ENCODE measurements at regions of chr4 and their contacts with region 1.

Region 1: DNA sequence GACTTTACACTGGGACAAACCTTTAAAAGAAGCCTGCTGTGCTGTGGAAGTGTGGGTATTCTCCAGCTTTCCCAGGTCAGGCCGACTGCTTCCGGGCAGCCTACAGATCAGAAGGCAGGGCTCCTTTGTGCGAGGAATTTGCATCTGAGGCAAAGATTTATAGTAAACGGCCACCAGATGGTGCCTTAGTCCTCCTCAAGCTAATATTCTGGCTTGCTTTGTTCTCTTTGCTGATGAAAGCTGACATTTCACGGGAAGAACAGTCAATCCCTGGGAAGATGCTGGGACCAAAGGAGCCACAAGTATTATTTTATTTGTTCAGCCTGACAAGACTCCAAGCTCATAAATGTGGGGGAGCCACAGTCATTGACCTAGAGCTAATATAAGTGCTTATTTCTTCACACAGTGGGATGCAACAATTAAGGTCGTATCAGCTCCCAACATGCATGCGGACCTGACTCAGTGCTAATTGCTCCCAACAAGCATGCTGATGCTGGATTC is 120.7 kb upstream of the TRIM2 start:
- DNase-seq: peak; percentile 36 to 92 (median 76)

Region 2: GRCh38 chr4:152849350-152849749 is 234.1 kb before region 1 on chr4:
- intact Hi-C with region 1: loop called (anchors 2 kb)
- DNase-seq: no peak

Region 3: GRCh38 chr4:153038623-153039311 is 44.7 kb before region 1 on chr4:
- intact Hi-C with region 1: no loop called
- DNase-seq: peak in 1 of 42 donors; percentile 15

Region 4: DNA sequence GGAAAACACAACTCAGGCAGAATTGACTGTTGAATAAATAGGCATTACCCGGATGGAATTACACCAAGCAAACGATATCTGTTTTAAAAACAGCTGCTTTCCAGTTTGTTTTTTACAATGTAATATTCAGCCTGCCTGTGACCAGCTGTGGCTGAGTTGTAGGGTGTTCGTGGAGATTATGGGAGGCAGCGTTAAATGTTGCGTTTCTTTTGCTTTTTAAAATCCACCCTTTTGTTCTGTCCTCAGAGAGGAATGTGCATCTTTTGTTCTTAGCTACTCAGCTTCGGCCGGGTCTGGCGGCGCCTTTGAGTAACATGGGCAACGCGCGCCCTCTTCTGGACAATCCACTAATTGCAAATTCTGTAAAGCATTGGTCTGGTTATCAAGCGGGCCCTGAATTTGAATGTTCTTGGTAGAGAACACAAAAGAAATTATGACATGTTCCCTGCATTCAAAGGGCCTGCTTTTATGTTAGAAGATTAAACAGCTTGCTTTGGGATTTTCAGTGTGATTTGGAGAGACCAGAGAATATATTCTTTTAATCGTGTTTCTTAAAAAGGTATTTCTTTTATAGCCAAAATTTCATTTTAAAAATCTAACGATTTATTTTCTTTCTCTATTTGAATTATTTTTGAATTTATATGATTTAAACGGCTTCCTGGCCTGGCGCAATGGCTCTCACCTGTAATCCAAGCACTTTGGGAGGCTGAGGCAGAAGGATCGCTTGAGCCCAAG is 44.4 kb after region 1 on chr4:
- intact Hi-C with region 1: loop called (anchors 1 kb)
- DNase-seq: peak; percentile 81 to 99 (median 94)

Region 5: GRCh38 chr4:153432968-153433753 is 349.7 kb after region 1 on chr4:
- intact Hi-C with region 1: no loop called
- DNase-seq: peak in 32 of 42 donors; percentile 14 to 64 (median 34)

Region 6: DNA sequence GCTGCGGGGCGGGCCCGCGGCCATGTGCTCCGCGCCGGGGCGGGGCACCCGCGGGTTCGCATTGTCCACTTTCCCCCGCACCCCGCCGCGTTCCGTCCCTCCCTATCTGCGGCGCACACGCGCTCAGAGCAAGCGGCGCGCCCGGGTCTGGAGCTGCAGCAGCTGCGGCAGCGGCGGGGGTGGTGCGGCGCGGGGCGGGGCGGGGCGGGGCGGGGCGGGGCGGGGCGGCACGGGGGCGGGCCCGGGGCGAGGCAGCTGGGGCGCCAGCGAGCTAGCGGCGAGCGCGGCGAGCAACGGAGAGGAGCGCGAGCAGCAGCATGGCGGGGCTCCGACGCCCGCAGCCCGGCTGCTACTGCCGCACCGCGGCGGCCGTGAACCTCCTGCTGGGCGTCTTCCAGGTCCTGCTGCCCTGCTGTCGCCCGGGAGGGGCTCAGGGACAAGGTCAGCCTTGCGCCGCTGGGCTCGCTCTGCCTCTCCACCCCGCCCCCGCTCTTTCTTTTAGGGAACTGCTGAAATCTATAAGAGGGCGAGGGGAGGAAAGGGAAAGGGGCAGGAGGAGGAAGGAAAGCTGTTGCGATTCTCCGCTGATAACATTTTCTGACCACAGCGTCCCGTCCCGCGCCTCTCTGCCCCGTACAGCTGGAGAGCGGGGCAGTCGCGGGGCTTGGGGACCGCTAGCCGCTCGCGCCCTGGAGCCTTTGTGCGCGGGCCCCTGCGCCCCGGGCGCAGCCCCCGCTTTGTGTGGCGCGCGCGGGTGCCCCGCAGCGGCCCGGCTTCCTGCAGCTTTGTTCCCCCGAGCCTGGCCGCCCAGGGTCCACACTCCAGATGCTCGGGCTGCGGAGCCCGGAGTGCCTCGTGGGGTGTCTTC is 382.8 kb after region 1 on chr4 and contains the start of gene TMEM131L:
- intact Hi-C with region 1: no loop called
- DNase-seq: peak; percentile 37 to 90 (median 77)